HEK293 (cell line): ENCODE measurements at regions of chr15 and their contacts with region 1.

Region 1: GRCh38 chr15:32657198-32657883 is 15.8 kb downstream of the SCG5 start:
- H3K4me3 ChIP-seq: no peak overlapping the region
- H3K27ac ChIP-seq: no peak overlapping the region
- H3K4me1 ChIP-seq: no peaks in the 10 kb centered on the region
- CTCF ChIP-seq: no peak

Region 2: DNA sequence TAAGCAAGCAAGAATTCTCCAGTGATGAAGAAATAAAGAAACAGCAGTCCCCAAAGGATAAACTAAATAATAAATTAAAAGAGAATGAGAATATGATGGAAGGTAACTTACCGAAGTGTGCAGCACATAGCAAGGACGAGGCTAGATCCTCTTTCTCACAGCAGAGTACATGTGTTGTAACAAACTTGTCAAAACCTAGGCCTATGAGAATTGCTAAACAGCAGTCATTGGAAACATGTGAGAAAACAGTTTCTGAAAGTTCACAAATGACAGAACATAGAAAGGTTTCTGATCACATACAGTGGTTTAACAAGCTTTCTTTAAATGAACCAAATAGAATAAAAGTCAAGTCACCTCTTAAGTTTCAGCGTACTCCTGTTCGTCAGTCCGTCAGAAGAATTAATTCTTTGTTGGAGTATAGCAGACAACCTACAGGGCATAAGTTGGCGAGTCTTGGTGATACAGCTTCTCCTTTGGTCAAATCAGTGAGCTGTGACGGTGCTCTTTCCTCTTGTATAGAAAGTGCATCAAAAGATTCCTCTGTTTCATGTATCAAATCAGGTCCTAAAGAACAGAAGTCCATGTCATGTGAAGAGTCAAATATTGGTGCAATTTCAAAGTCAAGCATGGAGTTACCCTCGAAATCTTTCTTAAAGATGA is 20.3 kb before region 1 on chr15:
- CTCF ChIA-PET with region 1: no interaction called
- POLR2A ChIA-PET with region 1: no interaction called
- H3K4me3 ChIP-seq: no peak overlapping the region
- H3K27ac ChIP-seq: no peak overlapping the region
- H3K4me1 ChIP-seq: no peaks in the 10 kb centered on the region
- CTCF ChIP-seq: no peak

Region 3: GRCh38 chr15:32717426-32718226 is 60.3 kb after region 1 on chr15 and contains the start of gene GREM1:
- CTCF ChIA-PET with region 1: no interaction called
- POLR2A ChIA-PET with region 1: no interaction called
- H3K4me3 ChIP-seq: peak within 1 kb of the TSS; percentile 29
- H3K27ac ChIP-seq: no peak within 1 kb of the TSS; the same call in 1 of the 2 replicates
- H3K4me1 ChIP-seq: peaks cover 2% of the 10 kb centered on the region; the same call in 1 of the 2 replicates
- CTCF ChIP-seq: no peak

Region 4: DNA sequence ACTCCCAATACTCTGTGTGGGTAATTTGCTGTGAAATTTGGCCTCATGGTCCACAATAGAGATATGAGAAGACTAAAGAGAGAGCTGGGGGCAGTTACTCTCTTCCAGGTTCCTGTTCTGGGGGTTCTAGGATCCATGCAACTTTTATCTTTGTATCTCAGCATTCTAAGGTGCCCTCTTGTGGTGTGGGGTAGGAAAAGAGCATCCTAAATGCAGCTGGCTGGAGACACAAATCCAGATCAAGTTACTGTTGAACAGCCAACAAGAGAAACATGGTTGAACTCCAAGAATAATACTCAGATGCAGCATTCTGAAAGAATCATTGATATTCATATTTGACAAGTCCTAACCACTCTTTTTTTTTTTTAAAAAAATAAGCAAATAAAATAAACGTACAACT is 298.7 kb after region 1 on chr15:
- CTCF ChIA-PET with region 1: interaction called, 13 read pairs
- POLR2A ChIA-PET with region 1: no interaction called
- H3K4me3 ChIP-seq: no peak overlapping the region
- H3K27ac ChIP-seq: no peak overlapping the region
- H3K4me1 ChIP-seq: no peaks in the 10 kb centered on the region
- CTCF ChIP-seq: no peak

Region 5: GRCh38 chr15:32994810-32995424 is 337.6 kb after region 1 on chr15:
- CTCF ChIA-PET with region 1: interaction called, 80 read pairs
- POLR2A ChIA-PET with region 1: no interaction called
- H3K4me3 ChIP-seq: no peak overlapping the region
- H3K27ac ChIP-seq: no peak overlapping the region
- H3K4me1 ChIP-seq: peaks cover 5% of the 10 kb centered on the region
- CTCF ChIP-seq: no peak